RWPE1 (cell line): ENCODE measurements at regions of chr5 and their contacts with region 1.

Region 1: DNA sequence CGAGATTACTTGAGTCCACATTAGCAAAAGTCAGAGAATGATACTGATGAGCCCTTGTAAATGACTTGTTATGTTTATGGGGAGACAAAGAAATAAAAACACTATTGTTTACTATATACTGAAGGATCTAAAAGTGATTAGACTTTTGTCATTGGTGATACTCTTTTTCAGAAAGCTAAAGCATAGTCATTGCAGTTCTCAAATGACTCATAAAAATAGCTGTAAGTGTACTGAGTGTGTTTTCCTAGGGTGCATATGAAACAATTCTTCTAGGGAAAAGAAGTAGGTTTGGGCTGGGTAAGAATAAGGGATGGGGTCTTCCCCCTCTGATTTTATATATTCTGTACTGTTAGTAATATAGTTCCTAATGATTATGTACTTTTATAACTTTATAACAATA is 32.6 kb downstream of the WDR36 start:
- DNase-seq: no peak
- H3K27ac ChIP-seq: no peak overlapping the region
- CTCF ChIP-seq: no peak

Region 2: GRCh38 chr5:111113678-111114077 is 11.1 kb before region 1 on chr5:
- CTCF ChIA-PET with region 1: interaction called, 12 read pairs
- POLR2A ChIA-PET with region 1: no interaction called
- DNase-seq: no peak
- H3K27ac ChIP-seq: no peak overlapping the region
- CTCF ChIP-seq: no peak